ENCODE measurements at regions of chr2 and their contacts with region 1.

Region 1: DNA sequence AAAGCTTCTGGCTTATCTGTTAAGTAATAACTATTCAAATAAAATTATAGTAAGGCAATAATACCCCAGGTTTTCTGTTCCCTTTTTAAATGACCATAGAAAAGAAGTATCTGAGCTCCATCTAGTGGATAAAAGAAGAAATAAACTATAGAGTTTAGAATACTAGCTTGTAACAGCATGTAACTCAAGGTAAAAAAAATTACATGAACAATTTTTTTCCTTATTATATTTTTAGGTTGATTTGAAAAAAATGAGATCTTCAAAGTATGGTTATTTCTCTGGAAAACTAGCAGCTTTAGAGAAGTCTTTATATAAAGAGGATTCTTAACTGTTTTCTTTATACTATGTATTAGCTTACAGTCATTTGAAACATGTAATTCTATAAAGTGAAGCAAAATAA is 58.1 kb downstream of the NCKAP1 start:
- DNase-seq: no peak
- ATAC-seq: no peak
- H3K4me3 Mint-ChIP-seq: no peak overlapping the region
- H3K27ac Mint-ChIP-seq: no peak overlapping the region
- H3K4me1 Mint-ChIP-seq: peaks cover 3% of the 10 kb centered on the region
- H3K27me3 Mint-ChIP-seq: no peaks in the 10 kb centered on the region

Region 2: GRCh38 chr2:182186132-182186735 is 793.9 kb before region 1 on chr2:
- CTCF ChIA-PET with region 1: interaction called, 14 read pairs
- POLR2A ChIA-PET with region 1: no interaction called
- DNase-seq: no peak
- ATAC-seq: no peak
- H3K4me3 Mint-ChIP-seq: no peak overlapping the region
- H3K27ac Mint-ChIP-seq: no peak overlapping the region
- H3K4me1 Mint-ChIP-seq: no peaks in the 10 kb centered on the region
- H3K27me3 Mint-ChIP-seq: peaks cover 11% of the 10 kb centered on the region

Region 3: DNA sequence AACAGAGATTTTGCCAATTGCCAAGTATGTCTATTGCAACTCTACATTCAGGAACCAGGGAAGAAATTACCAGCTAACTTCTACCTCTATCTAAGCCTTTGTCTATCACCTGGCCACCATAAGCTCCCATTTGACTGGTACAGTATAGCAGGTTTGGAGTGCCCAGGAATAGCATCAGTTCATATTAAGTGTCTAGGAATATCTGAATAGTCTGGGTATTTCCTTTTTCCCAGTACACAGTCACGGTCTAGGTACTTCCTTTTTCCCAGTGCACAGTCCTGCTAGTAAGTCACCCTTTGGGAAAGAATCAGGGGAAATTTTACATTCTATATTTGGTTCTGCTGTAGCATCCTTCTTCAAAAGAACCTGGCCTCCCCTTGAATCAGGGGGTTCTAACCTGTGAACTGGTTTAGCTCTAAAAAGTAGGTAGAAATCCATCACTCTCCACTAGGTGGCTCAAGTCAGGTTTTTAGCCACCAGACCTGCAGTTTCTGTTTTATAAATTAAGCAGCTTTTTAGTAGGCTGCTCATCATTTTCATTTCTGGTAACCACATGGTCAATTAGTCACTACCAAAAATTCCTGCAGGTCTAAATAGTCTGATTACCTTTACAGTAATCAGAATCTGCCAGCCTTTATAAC is 313.3 kb before region 1 on chr2:
- CTCF ChIA-PET with region 1: interaction called, 36 read pairs
- POLR2A ChIA-PET with region 1: no interaction called
- DNase-seq: peak; percentile 28
- ATAC-seq: peak; percentile 64
- H3K4me3 Mint-ChIP-seq: no peak overlapping the region
- H3K27ac Mint-ChIP-seq: no peak overlapping the region
- H3K4me1 Mint-ChIP-seq: no peaks in the 10 kb centered on the region
- H3K27me3 Mint-ChIP-seq: peaks cover 17% of the 10 kb centered on the region

Region 4: DNA sequence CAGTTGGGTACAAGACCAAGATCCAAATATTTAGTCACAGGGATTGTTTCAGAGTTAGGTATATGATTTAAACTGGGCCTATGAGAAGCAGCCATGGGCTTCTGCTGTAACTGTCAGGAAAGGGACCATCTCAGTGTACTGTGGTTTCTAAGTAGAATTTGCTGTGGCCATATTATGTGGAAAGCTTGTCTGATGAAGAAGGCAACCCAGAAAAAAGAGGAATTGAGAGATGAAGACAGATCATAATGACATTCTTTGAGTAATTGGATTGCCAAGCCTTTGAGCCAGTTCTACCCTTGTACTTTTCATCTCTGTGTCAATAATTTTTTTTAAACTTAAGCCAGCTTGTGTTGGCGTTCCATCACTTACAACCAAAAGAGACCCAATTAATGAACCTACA is 403.7 kb after region 1 on chr2:
- CTCF ChIA-PET with region 1: no interaction called
- POLR2A ChIA-PET with region 1: no interaction called
- DNase-seq: no peak
- ATAC-seq: no peak
- H3K4me3 Mint-ChIP-seq: no peak overlapping the region
- H3K27ac Mint-ChIP-seq: no peak overlapping the region
- H3K4me1 Mint-ChIP-seq: no peaks in the 10 kb centered on the region
- H3K27me3 Mint-ChIP-seq: no peaks in the 10 kb centered on the region